ENCODE measurements at regions of chr2 and their contacts with region 1.

Region 1: GRCh38 chr2:233867993-233868532 is at the start of gene MSL3B:
- DNase-seq: no peak
- H3K4me3 ChIP-seq: peak within 1 kb of the TSS; percentile 79
- H3K27me3 ChIP-seq: no peaks in the 10 kb centered on the region; the same call in none of the 2 replicates
- CTCF ChIP-seq: no peak

Region 2: DNA sequence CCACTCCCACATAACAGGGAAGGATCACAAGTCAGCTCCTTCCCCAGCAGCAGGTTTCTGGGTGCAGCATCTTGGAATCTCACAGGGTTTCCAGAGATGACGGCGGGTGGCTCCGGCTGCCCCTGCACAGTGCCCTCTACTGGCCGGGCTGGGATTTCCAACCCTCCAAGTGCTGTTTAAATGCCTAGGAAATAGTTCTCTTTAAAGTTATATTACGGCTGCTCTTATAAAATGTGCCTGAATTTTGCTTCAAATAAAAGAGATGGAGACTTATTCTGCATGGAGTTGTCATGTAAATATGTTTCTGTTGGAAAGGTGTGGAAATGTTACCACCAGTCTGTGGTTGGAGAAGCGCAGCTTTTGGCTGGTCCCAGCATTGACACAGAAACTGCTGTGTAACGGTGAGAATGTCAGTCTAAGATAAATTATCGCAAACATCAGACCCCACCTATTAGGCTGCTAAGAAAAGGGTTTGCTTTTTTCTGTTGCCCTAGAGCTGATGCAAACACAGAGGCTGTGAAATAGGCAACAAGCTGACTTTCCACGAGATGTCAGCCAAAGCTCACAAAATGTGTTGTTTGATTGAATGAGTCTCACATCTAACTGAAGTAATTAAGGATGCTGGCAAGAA is 10.4 kb before region 1 on chr2:
- CTCF ChIA-PET with region 1: interaction called, 4 read pairs
- POLR2A ChIA-PET with region 1: interaction called, 11 read pairs
- DNase-seq: no peak
- H3K4me3 ChIP-seq: no peak overlapping the region
- H3K27me3 ChIP-seq: no peaks in the 10 kb centered on the region
- CTCF ChIP-seq: peak; percentile 74

Region 3: GRCh38 chr2:234427081-234428061 is 559.3 kb after region 1 on chr2:
- CTCF ChIA-PET with region 1: no interaction called
- POLR2A ChIA-PET with region 1: interaction called, 12 read pairs
- DNase-seq: peak; percentile 52
- H3K4me3 ChIP-seq: no peak overlapping the region
- H3K27me3 ChIP-seq: no peaks in the 10 kb centered on the region
- CTCF ChIP-seq: no peak